Activated CD8-positive, alpha-beta T cell treated with anti-CD3 and anti-CD28 coated beads for 36 hours (primary cell): ENCODE measurements at regions of chr22 and their contacts with region 1.

Region 1: DNA sequence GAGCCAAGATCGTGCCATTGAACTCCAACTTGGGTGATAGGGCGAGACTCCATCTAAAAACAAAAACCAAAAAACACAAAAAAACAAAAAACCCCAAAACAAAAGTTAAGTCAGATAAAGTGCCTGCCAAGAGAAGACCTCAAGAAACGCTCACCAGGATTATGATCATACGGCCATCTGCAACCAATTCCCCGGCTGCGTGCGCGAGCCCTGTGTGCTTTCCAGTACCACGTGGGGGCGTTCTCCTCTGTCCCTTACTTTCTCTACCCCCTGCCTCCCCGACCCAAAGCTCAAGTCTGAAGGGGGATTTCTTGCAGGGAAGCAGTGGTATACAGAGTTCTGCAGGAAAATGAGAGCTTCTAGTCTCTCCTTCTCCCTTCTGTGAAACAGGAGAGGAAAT is 10.5 kb upstream of the RPS19BP1 start:
- DNase-seq: peak; percentile 59
- ATAC-seq: peak; percentile 47
- H3K4me3 Mint-ChIP-seq: no peak overlapping the region
- H3K27ac Mint-ChIP-seq: no peak overlapping the region
- H3K4me1 Mint-ChIP-seq: peaks cover 11% of the 10 kb centered on the region
- H3K27me3 Mint-ChIP-seq: peaks cover 24% of the 10 kb centered on the region
- CTCF ChIP-seq: peak; percentile 38

Region 2: DNA sequence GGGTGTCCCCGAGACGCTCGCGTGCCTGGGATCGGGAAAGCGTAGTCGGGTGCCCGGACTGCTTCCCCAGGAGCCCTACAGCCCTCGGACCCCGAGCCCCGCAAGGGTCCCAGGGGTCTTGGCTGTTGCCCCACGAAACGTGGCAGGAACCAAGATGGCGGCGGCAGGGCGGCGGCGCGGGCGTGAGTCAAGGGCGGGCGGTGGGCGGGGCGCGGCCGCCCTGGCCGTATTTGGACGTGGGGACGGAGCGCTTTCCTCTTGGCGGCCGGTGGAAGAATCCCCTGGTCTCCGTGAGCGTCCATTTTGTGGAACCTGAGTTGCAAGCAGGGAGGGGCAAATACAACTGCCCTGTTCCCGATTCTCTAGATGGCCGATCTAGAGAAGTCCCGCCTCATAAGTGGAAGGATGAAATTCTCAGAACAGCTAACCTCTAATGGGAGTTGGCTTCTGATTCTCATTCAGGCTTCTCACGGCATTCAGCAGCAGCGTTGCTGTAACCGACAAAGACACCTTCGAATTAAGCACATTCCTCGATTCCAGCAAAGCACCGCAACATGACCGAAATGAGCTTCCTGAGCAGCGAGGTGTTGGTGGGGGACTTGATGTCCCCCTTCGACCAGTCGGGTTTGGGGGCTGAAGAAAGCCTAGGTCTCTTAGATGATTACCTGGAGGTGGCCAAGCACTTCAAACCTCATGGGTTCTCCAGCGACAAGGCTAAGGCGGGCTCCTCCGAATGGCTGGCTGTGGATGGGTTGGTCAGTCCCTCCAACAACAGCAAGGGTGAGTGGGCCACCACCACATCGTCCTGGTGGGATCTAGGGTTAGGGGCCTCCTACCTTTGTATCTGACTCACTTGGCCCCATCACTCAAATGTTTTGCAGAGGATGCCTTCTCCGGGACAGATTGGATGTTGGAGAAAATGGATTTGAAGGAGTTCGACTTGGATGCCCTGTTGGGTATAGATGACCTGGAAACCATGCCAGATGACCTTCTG is 21.9 kb before region 1 on chr22:
- CTCF ChIA-PET with region 1: no interaction called
- POLR2A ChIA-PET with region 1: no interaction called
- intact Hi-C with region 1: no loop called
- DNase-seq: peak; percentile 78
- ATAC-seq: peak; percentile 11
- H3K4me3 Mint-ChIP-seq: peak overlapping the region; percentile 89
- H3K27ac Mint-ChIP-seq: peak overlapping the region; percentile 98
- H3K4me1 Mint-ChIP-seq: peaks cover 55% of the 10 kb centered on the region
- H3K27me3 Mint-ChIP-seq: no peaks in the 10 kb centered on the region
- CTCF ChIP-seq: no peak

Region 3: GRCh38 chr22:39574779-39575551 is 31.9 kb after region 1 on chr22:
- CTCF ChIA-PET with region 1: no interaction called
- POLR2A ChIA-PET with region 1: no interaction called
- intact Hi-C with region 1: no loop called
- DNase-seq: no peak
- ATAC-seq: no peak
- H3K4me3 Mint-ChIP-seq: no peak overlapping the region
- H3K27ac Mint-ChIP-seq: no peak overlapping the region
- H3K4me1 Mint-ChIP-seq: no peaks in the 10 kb centered on the region
- H3K27me3 Mint-ChIP-seq: peaks cover 3% of the 10 kb centered on the region
- CTCF ChIP-seq: no peak

Region 4: DNA sequence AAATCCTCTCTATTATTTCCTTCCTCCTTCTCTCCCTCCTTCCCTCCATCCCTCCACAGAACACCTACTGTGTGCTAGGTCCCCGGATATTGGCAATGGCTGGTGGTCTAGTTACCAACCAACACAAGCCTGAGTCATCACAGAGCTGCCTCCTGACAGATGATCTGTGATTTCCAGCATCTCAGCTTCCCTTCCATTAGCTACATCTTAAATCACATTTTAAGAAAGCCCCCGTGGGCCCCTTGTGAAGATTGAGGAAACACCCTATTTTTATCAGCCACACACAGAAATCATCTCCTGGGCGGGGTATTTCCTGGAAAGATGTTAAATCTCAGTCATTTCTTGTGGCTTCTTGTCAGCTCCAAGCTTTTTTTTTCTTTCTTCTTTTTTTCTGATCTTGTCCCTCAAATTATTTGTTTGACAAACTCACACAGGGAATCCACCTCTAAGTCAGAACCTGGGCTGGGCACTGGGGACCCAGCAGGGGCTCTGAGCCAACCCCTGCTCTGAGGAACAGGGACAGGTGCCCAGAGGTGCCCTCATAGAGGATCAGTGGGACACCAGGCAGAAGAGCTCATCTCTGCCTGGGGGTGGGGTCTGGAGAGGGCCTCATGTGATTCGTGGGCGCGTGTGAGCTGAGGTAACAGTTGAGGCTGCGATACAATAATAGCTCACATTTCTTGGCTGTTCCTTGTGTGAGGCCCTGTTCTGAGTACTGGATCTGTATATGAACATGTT is 69.9 kb after region 1 on chr22:
- CTCF ChIA-PET with region 1: no interaction called
- POLR2A ChIA-PET with region 1: no interaction called
- intact Hi-C with region 1: loop called (anchors 10 kb)
- DNase-seq: peak; percentile 81
- ATAC-seq: peak; percentile 74
- H3K4me3 Mint-ChIP-seq: no peak overlapping the region
- H3K27ac Mint-ChIP-seq: peak overlapping the region; percentile 82
- H3K4me1 Mint-ChIP-seq: peaks cover 26% of the 10 kb centered on the region
- H3K27me3 Mint-ChIP-seq: peaks cover 7% of the 10 kb centered on the region
- CTCF ChIP-seq: no peak

Region 5: DNA sequence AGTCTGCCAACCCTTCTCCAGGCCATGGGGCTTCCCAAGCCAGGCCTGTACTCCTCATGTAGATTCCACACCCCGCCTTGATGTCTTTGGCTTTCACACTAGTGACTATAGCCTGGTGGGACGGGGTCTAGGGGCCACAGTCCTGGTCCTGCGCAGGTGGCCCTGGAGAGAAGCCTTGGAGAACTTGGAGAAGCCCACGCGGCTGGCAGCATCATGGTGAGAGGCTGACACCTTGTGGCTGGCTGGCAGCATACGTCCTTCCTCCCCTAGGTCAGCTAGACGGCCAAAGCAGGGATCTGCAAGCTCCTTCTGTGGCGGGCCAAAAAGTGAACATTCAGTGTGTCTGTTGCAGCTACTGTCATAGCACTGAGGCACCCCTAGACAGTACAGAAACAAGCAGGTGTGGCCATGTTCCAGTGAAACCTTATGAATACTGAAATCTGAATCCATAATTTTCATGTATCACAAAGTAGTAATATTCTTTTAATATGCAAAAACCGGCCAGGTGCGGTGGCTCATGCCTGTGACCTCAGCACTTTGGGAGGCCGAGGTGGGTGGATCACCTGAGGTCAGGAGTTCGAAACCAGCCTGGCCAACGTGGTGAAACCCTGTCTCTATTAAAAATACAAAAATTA is 493.6 kb after region 1 on chr22:
- CTCF ChIA-PET with region 1: interaction called, 10 read pairs
- POLR2A ChIA-PET with region 1: no interaction called
- intact Hi-C with region 1: no loop called
- DNase-seq: peak; percentile 75
- ATAC-seq: peak; percentile 87
- H3K4me3 Mint-ChIP-seq: no peak overlapping the region
- H3K27ac Mint-ChIP-seq: no peak overlapping the region
- H3K4me1 Mint-ChIP-seq: no peaks in the 10 kb centered on the region
- H3K27me3 Mint-ChIP-seq: peaks cover 5% of the 10 kb centered on the region
- CTCF ChIP-seq: peak; percentile 87